ENCODE measurements at regions of chr10 and their contacts with region 1.

Region 1: DNA sequence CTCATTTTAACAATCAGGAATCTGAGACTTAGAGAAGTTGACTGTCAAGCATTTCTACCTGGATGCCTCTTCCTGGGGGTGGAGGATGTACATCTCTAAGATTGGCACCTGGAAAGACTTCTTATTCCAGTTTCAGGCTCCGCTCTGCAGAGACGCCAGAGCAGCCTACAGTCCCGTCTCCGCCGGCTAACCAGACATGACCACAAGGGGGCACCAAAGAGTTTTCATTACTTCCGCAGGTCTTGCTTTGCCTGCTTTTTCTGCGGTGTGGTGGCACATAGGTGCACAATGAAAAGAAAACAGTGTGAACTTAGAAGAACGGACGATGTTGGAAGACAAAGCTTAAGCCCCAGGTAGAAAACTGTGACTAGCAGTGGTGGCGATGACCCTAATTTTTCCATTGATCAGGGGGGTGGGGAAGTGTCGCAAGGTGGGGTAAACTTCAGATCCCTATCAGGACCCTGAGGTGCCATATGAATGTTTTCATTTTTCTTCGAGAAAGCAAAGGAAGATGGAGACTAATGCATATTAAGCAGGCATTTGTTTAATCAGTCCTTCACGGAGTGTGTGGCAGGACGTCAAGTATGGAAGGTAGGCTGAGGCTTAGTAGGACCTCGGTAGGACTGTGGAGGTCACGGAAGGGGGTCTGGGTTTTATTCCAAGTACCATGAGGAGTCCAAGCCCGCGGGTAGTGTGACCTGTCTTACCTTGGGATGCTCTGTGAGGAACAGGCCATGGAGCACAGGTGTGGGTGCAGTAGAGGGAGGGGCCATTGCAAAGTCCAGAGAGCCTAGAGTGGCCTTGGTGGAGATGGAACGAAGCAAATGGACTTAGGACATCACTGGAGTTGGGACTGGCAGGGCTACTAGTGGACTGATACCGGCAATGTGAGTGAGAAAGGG is 60.1 kb upstream of the SORCS3 start:
- DNase-seq: peak in 9 of 10 donors; percentile 49 to 86 (median 75)
- H3K4me3 ChIP-seq: peak overlapping the region in 20 of 59 donors; percentile 4 to 39 (median 19)
- H3K27ac ChIP-seq: peak overlapping the region in 6 of 59 donors; percentile 3 to 38 (median 21)
- H3K27me3 ChIP-seq: peaks cover 0 to 26% (median 0%) of the 10 kb centered on the region in 45 donors
- CTCF ChIP-seq: peak; percentile 51 to 92 (median 86)

Region 2: GRCh38 chr10:104642658-104643302 is 61.8 kb after region 1 on chr10:
- intact Hi-C with region 1: loop called in 1 of 2 experiments (anchors 2 kb)
- DNase-seq: peak; percentile 42 to 90 (median 82)
- H3K4me3 ChIP-seq: peak overlapping the region; percentile 29 to 73 (median 55)
- H3K27ac ChIP-seq: peak overlapping the region in 25 of 59 donors; percentile 13 to 74 (median 39)
- H3K27me3 ChIP-seq: peaks cover 0 to 54% (median 26%) of the 10 kb centered on the region in 45 donors
- CTCF ChIP-seq: peak; percentile 19 to 78 (median 64)

Measured in dorsolateral prefrontal cortex (tissue), 120 donors.